Mucosa of descending colon (tissue), 3 donors: ENCODE measurements at regions of chr14 and their contacts with region 1.

Region 1: GRCh38 chr14:49786315-49787110 is 18.6 kb downstream of the KLHDC2 start:
- DNase-seq: no peak
- ATAC-seq: no peak
- H3K4me3 ChIP-seq: no peak overlapping the region
- H3K4me1 ChIP-seq: peaks cover 5% of the 10 kb centered on the region
- CTCF ChIP-seq: no peak

Region 2: GRCh38 chr14:49720744-49721143 is 65.8 kb before region 1 on chr14:
- intact Hi-C with region 1: no loop called
- DNase-seq: no peak
- ATAC-seq: no peak
- H3K4me3 ChIP-seq: no peak overlapping the region
- H3K4me1 ChIP-seq: no peaks in the 10 kb centered on the region
- CTCF ChIP-seq: no peak

Region 3: GRCh38 chr14:49732896-49733295 is 53.6 kb before region 1 on chr14:
- intact Hi-C with region 1: no loop called
- DNase-seq: no peak
- ATAC-seq: no peak
- H3K4me3 ChIP-seq: no peak overlapping the region
- H3K4me1 ChIP-seq: no peaks in the 10 kb centered on the region
- CTCF ChIP-seq: no peak

Region 4: GRCh38 chr14:49828640-49829039 is 42.1 kb after region 1 on chr14:
- intact Hi-C with region 1: loop called (anchors 10 kb)
- DNase-seq: no peak
- ATAC-seq: no peak
- H3K4me3 ChIP-seq: no peak overlapping the region
- H3K4me1 ChIP-seq: no peaks in the 10 kb centered on the region
- CTCF ChIP-seq: no peak

Region 5: GRCh38 chr14:49862089-49862673 is 75.7 kb after region 1 on chr14:
- intact Hi-C with region 1: no loop called
- DNase-seq: peak; percentile 82 to 88 (median 84)
- ATAC-seq: peak; percentile 82
- H3K4me3 ChIP-seq: peak overlapping the region; percentile 12
- H3K4me1 ChIP-seq: peaks cover under 1% of the 10 kb centered on the region
- CTCF ChIP-seq: peak; percentile 98

Region 6: DNA sequence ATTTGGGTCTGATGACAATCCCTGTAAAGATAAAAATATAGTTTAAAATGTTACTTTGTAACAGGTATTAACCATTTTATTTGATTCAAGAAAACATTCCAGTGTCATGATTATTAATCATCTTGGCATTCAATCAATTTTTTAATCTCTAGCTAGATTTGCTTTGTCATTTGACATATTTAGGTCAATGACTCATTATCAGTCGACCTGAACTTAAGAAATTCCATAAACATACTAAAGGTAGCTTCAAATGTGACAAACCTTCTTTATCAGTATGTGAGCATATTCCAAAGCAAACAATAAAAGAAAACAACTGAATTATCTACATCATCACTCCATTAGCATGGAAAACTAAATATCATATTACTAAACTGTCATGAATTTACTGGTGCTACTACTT is 660.9 kb after region 1 on chr14:
- intact Hi-C with region 1: no loop called
- DNase-seq: no peak
- ATAC-seq: no peak
- H3K4me3 ChIP-seq: no peak overlapping the region
- H3K4me1 ChIP-seq: no peaks in the 10 kb centered on the region
- CTCF ChIP-seq: no peak